Activated T-helper 2 cell treated with anti-CD3 and anti-CD28 coated beads, Interferon-gamma antibody, Interleukin-2, Interleukin-4, amounts not matched to agents 10 μg/mL and 5 μg/mL and 100 μg/mL, durations not matched to agents 14 hours and 24 hours and 36 hours (primary cell): ENCODE measurements at regions of chr16 and their contacts with region 1.

Region 1: GRCh38 chr16:29678691-29679267 is at the start of gene QPRT:
- DNase-seq: no peak
- H3K4me3 Mint-ChIP-seq: peak within 1 kb of the TSS; percentile 73
- H3K27ac Mint-ChIP-seq: peak within 1 kb of the TSS; percentile 88
- H3K4me1 Mint-ChIP-seq: peaks cover 18% of the 10 kb centered on the region
- H3K27me3 Mint-ChIP-seq: no peaks in the 10 kb centered on the region
- total RNA-seq, gene QPRT: 24.1 and 29.0 TPM in 2 replicates

Region 2: DNA sequence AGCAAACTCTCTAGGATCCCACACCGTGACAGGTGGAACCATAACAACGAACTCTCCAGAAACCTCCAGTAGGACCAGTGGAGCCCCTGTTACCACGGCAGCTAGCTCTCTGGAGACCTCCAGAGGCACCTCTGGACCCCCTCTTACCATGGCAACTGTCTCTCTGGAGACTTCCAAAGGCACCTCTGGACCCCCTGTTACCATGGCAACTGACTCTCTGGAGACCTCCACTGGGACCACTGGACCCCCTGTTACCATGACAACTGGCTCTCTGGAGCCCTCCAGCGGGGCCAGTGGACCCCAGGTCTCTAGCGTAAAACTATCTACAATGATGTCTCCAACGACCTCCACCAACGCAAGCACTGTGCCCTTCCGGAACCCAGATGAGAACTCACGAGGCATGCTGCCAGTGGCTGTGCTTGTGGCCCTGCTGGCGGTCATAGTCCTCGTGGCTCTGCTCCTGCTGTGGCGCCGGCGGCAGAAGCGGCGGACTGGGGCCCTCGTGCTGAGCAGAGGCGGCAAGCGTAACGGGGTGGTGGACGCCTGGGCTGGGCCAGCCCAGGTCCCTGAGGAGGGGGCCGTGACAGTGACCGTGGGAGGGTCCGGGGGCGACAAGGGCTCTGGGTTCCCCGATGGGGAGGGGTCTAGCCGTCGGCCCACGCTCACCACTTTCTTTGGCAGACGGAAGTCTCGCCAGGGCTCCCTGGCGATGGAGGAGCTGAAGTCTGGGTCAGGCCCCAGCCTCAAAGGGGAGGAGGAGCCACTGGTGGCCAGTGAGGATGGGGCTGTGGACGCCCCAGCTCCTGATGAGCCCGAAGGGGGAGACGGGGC is 14.5 kb before region 1 on chr16:
- intact Hi-C with region 1: loop called (anchors 2 kb)
- DNase-seq: peak; percentile 28
- H3K4me3 Mint-ChIP-seq: peak overlapping the region; percentile 94
- H3K27ac Mint-ChIP-seq: peak overlapping the region; percentile 93
- H3K4me1 Mint-ChIP-seq: peaks cover 40% of the 10 kb centered on the region
- H3K27me3 Mint-ChIP-seq: no peaks in the 10 kb centered on the region